AG04449 (cell line): ENCODE measurements at regions of chr4 and their contacts with region 1.

Region 1: DNA sequence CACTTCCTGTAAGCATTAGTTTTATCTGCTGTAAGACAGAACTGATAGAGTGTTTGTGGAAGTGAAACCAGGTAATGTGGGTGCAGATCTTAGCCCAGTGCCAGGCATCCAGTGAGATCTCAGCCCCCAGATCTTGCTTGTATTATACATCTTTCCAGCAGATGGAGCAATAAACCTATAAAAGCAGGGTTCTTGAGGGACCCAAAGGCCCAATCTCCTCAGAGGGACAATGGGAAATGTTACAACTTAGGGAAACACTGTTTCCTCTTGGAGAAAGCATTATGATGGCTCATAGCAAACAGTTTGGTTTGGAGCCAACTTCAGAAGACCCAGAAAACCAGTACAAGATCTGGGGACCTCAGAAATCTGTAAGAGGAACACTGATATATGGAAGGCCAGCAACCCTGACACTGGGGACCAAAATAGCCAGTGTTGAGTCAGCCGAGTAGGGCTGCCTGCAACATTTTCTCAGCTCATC is 206.3 kb downstream of the SLC7A11 start:
- DNase-seq: no peak
- H3K4me3 ChIP-seq: no peak overlapping the region
- CTCF ChIP-seq: peak; percentile 49

Region 2: GRCh38 chr4:138005486-138005885 is 30.3 kb before region 1 on chr4:
- CTCF ChIA-PET with region 1: interaction called, 11 read pairs
- POLR2A ChIA-PET with region 1: no interaction called
- DNase-seq: no peak
- H3K4me3 ChIP-seq: no peak overlapping the region
- CTCF ChIP-seq: no peak

Region 3: GRCh38 chr4:138050601-138051000 is 14.8 kb after region 1 on chr4:
- CTCF ChIA-PET with region 1: interaction called, 29 read pairs
- POLR2A ChIA-PET with region 1: interaction called, 7 read pairs
- DNase-seq: no peak
- H3K4me3 ChIP-seq: no peak overlapping the region
- CTCF ChIP-seq: no peak

Region 4: GRCh38 chr4:138090150-138090917 is 54.5 kb after region 1 on chr4:
- CTCF ChIA-PET with region 1: interaction called, 235 read pairs
- POLR2A ChIA-PET with region 1: interaction called, 3 read pairs
- DNase-seq: no peak
- H3K4me3 ChIP-seq: peak overlapping the region; percentile 38
- CTCF ChIP-seq: peak; percentile 45

Region 5: DNA sequence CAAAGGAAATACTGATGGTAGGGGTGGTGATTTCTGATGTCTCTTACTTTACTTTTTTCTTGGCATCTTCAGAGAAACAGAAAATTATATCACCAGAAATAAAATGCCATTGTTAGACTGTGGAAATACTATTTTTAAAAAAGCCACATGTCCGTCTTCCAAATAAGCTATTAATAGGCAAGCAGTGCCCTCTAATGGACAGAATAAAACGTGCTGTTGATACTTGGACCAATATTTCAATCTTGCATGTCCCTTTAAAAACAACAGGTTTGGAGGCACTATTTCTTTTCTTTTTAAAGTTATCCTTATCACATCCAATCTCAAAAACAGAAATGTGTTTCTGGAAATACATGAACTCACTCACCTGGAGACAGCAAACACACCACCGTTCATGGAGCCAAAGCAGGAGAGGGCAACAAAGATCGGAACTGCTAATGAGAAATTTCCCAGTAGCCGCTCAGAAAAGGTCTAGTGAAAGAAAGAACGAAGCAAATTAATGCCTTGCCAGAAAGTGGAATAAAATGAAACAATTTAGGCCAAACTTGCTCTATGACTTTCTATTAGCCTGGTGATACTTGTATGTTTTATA is 147.1 kb after region 1 on chr4:
- CTCF ChIA-PET with region 1: interaction called, 92 read pairs
- POLR2A ChIA-PET with region 1: no interaction called
- DNase-seq: peak; percentile 29
- H3K4me3 ChIP-seq: no peak overlapping the region
- CTCF ChIP-seq: peak; percentile 42

Region 6: GRCh38 chr4:138680989-138681604 is 645.3 kb after region 1 on chr4:
- CTCF ChIA-PET with region 1: interaction called, 55 read pairs
- POLR2A ChIA-PET with region 1: no interaction called
- DNase-seq: peak; percentile 26
- H3K4me3 ChIP-seq: no peak overlapping the region
- CTCF ChIP-seq: peak; percentile 72